ENCODE measurements at regions of chr6 and their contacts with region 1.

Region 1: GRCh38 chr6:108541838-108542759 is 18.6 kb upstream of the FOXO3 start:
- DNase-seq: no peak
- H3K4me3 ChIP-seq: no peak overlapping the region
- CTCF ChIP-seq: peak; percentile 77

Region 2: GRCh38 chr6:107964671-107965340 is 577.3 kb before region 1 on chr6:
- CTCF ChIA-PET with region 1: no interaction called
- POLR2A ChIA-PET with region 1: no interaction called
- DNase-seq: no peak
- H3K4me3 ChIP-seq: no peak overlapping the region
- CTCF ChIP-seq: no peak

Region 3: DNA sequence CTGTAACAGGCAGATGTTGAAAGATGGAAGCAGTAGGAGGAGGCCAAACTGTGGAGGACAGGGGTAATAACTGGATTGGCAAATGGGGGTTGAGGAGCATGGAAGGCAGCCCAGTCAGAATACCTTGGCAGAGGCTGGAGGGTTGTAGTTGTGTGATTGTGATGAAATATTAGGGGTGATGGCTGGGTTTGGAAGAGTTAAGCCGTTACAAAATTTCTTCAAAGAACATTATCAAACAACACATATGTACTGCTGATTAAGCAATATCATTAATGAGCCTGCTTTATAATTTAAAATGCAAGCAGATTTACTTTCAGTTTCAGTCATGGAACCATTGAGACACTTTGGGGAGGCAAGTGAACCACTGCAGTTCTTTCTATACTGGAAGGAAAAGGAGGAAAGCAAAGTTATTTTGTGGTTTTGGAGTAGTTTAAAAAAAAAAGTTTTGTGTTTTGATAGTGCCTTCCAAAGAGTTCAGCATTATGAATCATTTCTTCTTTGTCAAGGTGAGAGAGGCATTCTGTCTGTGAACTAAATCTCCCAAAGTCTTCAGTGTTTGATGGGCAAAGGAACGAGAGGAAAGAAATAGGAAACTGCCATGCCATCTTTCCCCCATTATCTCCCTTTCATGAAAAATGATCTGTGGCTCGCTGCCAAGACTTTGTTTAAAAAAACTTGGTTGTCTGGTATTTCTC is 39.3 kb after region 1 on chr6:
- CTCF ChIA-PET with region 1: no interaction called
- POLR2A ChIA-PET with region 1: no interaction called
- DNase-seq: no peak
- H3K4me3 ChIP-seq: peak overlapping the region; percentile 42
- CTCF ChIP-seq: no peak

Region 4: GRCh38 chr6:108779536-108780275 is 237.6 kb after region 1 on chr6:
- CTCF ChIA-PET with region 1: interaction called, 15 read pairs
- POLR2A ChIA-PET with region 1: no interaction called
- DNase-seq: no peak
- H3K4me3 ChIP-seq: no peak overlapping the region
- CTCF ChIP-seq: no peak

Region 5: DNA sequence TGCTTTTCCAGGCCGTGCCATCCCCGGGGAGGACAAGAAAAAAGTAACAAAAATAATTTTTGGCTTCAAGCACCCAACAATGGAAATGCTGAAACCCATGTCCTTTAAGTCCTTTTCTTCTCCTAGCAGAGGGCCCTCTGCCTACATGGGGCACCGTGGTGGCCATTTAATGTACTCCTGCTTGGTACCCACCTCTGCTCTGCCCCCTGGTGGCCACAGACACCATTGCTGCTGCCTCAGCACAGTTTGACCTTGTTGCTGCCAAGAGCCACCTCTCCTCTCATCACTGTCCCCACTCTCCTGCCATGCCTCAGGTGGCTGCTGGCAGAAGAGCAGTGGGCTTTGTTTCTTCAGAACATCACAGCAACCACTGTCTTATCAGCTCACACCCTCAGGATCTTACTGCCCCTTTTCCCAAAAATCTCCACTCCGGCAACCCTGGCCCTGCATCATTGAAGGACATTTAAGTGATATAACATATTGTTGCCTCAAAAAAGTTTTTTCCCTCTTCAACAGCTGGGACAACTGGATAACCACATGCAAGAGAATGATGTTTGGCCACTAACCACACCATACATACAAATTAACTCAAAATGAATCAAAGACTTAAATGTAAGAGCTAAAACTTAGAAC is 293.2 kb after region 1 on chr6:
- CTCF ChIA-PET with region 1: interaction called, 122 read pairs
- POLR2A ChIA-PET with region 1: no interaction called
- DNase-seq: peak; percentile 16
- H3K4me3 ChIP-seq: no peak overlapping the region
- CTCF ChIP-seq: peak; percentile 93

Region 6: GRCh38 chr6:108883172-108883571 is 341.1 kb after region 1 on chr6:
- CTCF ChIA-PET with region 1: interaction called, 28 read pairs
- POLR2A ChIA-PET with region 1: no interaction called
- DNase-seq: no peak
- H3K4me3 ChIP-seq: no peak overlapping the region
- CTCF ChIP-seq: no peak

Region 7: GRCh38 chr6:108896111-108896661 is 354.1 kb after region 1 on chr6:
- CTCF ChIA-PET with region 1: interaction called, 168 read pairs
- POLR2A ChIA-PET with region 1: interaction called, 3 read pairs
- DNase-seq: peak; percentile 84
- H3K4me3 ChIP-seq: no peak overlapping the region
- CTCF ChIP-seq: no peak

Measured in AG04449 (cell line).